Vagina (tissue), 2 donors: ENCODE measurements at regions of chr6 and their contacts with region 1.

Region 1: GRCh38 chr6:73675466-73676098 is 20.4 kb upstream of the CD109 start:
- DNase-seq: no peak
- H3K4me3 ChIP-seq: no peak overlapping the region
- H3K27ac ChIP-seq: no peak overlapping the region
- H3K4me1 ChIP-seq: no peaks in the 10 kb centered on the region
- H3K27me3 ChIP-seq: no peaks in the 10 kb centered on the region
- CTCF ChIP-seq: peak; percentile 55 to 82 (median 72)
- POLR2A ChIP-seq: no peak

Region 2: DNA sequence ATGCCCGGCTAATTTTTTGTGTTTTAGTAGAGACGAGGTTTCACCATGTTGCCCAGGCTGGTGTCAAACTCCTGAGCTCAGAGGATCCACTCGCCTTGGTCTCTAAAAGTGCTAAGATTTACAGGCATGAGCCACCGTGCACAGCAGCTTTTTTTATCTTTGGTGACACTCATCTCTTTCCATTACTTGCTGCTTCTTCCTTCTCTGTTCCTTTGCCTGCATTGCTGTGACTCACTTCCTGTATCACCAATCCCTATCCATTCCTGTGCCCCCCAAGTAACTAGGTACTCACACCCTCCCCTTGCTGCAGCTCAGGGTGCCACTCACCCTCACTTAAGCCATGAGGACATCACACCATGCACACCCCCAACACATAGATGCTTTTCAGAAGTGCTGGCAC is 474.8 kb before region 1 on chr6:
- intact Hi-C with region 1: no loop called
- DNase-seq: no peak
- H3K4me3 ChIP-seq: no peak overlapping the region
- H3K27ac ChIP-seq: no peak overlapping the region
- H3K4me1 ChIP-seq: no peaks in the 10 kb centered on the region
- H3K27me3 ChIP-seq: no peaks in the 10 kb centered on the region
- CTCF ChIP-seq: no peak
- POLR2A ChIP-seq: no peak

Region 3: GRCh38 chr6:73418081-73418741 is 257.4 kb before region 1 on chr6:
- intact Hi-C with region 1: no loop called
- DNase-seq: no peak
- H3K4me3 ChIP-seq: no peak overlapping the region
- H3K27ac ChIP-seq: no peak overlapping the region
- H3K4me1 ChIP-seq: no peaks in the 10 kb centered on the region
- H3K27me3 ChIP-seq: no peaks in the 10 kb centered on the region
- CTCF ChIP-seq: no peak
- POLR2A ChIP-seq: no peak

Region 4: DNA sequence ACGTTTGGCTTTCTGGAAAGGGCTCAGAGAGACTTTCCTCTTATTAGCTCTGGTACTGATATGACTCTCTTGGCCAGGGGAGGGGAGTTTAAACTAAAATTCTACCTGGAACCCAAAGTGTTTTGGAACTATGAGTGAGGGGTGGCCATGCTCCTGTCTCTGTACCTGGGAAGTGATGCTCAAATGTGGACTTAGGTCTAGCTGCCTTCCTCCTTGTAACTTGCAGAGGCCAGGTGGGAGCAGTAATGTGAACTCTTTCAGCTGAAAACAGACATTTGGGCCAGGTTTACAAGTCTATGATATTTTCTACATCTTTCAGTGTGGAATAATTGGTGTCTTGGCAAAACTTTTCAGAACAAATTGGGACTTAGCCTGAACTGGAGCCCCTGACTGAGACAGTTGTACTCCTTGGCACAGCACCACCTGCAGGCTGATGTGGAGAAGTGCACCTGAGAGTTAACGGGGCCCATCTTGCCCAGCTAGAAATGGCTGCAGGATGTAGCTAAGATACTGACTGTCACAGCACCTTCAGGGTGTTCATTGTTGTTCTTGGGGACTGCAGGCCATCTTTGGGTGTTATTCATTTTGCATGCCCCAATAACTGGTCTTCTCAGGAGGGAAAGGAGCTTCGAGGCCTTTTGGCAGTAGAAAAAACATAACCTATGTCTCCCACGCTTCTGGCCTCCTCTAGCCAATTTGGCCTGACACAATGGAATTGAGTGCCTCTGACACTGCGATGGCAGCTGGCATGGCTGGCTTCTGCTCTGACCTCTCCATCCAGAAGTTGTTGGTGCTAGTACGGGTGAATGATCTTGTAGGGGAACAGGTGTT is 57.5 kb after region 1 on chr6:
- intact Hi-C with region 1: loop called (anchors 10 kb)
- DNase-seq: no peak
- H3K4me3 ChIP-seq: no peak overlapping the region
- H3K27ac ChIP-seq: no peak overlapping the region
- H3K4me1 ChIP-seq: peaks cover 1% of the 10 kb centered on the region
- H3K27me3 ChIP-seq: no peaks in the 10 kb centered on the region
- CTCF ChIP-seq: peak; percentile 76 to 92 (median 84)
- POLR2A ChIP-seq: no peak

Region 5: DNA sequence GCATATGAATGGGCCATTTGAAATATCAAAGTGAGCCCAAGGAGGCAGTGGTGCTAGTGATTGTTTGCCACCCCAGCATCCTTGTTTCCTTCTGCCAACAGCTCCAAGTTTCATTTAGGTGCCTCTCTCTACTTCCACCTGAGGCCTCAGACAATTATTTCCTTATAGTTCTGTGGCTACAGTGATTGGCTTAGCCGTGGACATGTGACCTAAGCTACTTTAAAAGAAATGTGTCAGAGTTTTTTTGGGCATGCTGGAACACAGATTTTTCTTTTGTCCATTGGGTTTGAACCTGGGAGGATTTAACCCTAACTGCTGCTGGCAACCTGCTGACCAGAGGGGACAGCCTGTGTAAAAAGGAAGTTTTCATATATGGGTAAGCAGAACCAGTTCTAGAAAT is 339.8 kb after region 1 on chr6:
- intact Hi-C with region 1: no loop called
- DNase-seq: no peak
- H3K4me3 ChIP-seq: no peak overlapping the region
- H3K27ac ChIP-seq: no peak overlapping the region
- H3K4me1 ChIP-seq: no peaks in the 10 kb centered on the region
- H3K27me3 ChIP-seq: no peaks in the 10 kb centered on the region
- CTCF ChIP-seq: no peak
- POLR2A ChIP-seq: no peak